ENCODE measurements at regions of chr7 and their contacts with region 1.

Region 1: DNA sequence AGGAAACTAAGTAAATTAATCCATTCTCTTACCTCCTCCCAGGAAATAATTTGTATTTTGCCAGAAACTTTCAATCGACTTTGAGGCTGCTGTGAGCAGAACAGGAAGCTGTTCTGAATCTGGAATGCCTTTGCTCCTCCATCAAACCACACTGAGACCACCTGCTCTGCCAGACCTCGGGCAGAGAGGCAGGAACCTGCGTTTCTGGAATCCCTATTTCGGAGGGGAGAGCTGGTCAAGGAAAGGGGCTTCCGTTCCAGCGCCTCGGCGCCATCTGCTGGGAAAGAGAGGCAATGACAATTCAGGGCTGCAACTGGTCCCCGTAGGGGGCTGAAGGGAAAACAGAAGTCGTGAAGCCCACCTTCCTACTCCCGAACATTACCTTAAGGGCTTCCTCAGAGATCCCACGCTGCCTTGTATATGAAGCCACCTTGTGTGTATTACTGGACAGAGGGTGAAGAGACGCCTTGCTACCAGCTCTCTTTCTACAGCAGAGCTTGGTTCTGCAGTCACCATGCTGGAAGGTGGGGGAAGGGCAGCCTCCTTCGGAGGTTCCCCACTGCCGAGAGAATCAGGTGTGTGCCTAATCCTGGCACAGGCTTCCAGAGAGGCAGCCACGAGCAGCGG is 31.2 kb downstream of the ZNF467 start:
- DNase-seq: peak; percentile 74
- H3K4me3 ChIP-seq: peak overlapping the region; percentile 39
- H3K27ac ChIP-seq: no peak overlapping the region
- H3K4me1 ChIP-seq: peaks cover 5% of the 10 kb centered on the region
- H3K27me3 ChIP-seq: no peaks in the 10 kb centered on the region
- CTCF ChIP-seq: peak; percentile 94

Region 2: GRCh38 chr7:149662591-149663095 is 79.5 kb before region 1 on chr7:
- CTCF ChIA-PET with region 1: interaction called, 37 read pairs
- POLR2A ChIA-PET with region 1: no interaction called
- intact Hi-C with region 1: loop called (anchors 1 kb)
- DNase-seq: peak; percentile 80
- H3K4me3 ChIP-seq: no peak overlapping the region
- H3K27ac ChIP-seq: no peak overlapping the region
- H3K4me1 ChIP-seq: no peaks in the 10 kb centered on the region
- H3K27me3 ChIP-seq: peaks cover 5% of the 10 kb centered on the region
- CTCF ChIP-seq: peak; percentile 80